ENCODE measurements at regions of chr17 and their contacts with region 1.

Region 1: DNA sequence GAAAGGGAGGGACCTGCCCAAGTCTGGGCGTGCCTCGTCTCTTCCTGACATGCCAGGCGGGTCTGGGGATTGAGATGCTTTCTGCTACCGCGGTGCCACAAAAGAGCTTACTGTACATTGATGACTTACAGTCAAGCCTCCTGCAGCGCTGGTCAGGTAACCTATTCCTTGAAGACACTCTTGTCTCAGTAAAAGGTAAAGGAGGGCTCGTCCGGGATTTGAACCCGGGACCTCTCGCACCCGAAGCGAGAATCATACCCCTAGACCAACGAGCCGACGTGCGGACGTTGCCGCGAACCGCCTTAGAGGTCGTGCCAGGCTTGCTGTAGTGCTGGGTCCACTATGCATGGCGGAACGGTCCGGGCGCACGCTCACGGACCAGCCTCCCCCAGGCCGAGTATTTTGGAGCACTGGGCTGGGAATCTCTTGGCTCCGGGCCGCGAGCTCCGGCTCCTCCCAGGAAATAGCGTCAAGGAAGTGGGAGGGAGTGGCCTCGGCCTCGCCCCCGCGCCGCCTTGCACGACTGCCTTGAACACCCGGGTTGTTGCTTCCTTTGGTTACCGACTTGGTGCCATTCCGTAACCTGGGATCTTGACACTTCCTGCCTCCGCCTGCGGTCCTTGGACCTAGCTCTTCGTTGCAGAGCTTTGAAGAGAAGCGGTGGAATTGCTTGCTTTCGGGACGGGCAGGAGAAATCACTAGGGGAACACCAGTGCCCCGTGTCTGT is 12.4 kb upstream of the AURKB start:
- DNase-seq: peak; percentile 95
- H3K4me3 ChIP-seq: peak overlapping the region in 2 of 3 experiments; percentile 41 to 66
- H3K27ac ChIP-seq: peak overlapping the region; percentile 90
- H3K4me1 ChIP-seq: peaks cover 9% of the 10 kb centered on the region
- H3K27me3 ChIP-seq: no peaks in the 10 kb centered on the region
- CTCF ChIP-seq: no peak
- POLR2A ChIP-seq: peak; percentile 65

Region 2: DNA sequence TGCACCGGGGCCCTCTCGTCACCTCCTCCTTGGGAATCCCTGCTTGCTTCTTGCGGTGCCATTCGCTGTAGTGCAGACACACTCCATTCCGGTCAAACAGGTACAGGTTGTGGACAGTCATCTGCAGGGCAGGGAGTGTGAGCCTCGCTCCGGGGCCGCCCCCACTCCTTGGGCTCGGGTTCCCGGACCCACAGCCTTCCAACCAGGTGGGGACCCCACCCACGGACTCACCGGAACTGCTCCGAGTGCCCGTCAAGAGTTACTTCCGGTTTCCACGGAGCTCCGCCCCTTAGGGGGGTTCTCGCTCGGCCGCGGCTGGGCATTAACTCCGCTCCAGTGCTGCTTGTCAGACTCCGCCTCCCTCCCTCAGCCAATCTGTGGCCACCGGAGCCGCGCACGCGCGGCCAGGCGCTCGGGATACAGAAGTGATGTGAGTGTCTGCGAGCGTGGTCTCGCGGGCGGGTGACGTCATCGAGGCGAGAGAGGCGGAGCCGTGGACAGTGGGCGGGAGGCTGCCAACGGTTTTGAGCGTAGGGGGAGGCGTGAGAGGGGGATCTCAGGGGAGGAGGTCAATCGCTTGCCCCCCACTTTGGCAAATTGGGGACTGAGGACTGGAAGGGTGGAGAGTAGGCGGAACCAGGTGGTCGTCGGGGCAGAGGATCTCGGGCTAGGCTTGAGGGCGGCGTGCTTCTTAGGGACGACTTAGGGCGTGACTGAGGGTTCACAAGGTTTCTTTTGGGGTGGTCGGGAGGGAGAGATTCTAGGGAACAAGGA is 290.9 kb before region 1 on chr17 and contains the starts of genes CNTROB and TRAPPC1:
- CTCF ChIA-PET with region 1: no interaction called
- POLR2A ChIA-PET with region 1: no interaction called
- dilution Hi-C with region 1: no loop called
- intact Hi-C with region 1: no loop called
- DNase-seq: peak; percentile 99
- H3K4me3 ChIP-seq: peak within 1 kb of the TSS; percentile 74 to 98 (median 96)
- H3K27ac ChIP-seq: peak within 1 kb of the TSS; percentile 66
- H3K4me1 ChIP-seq: peaks cover 23% of the 10 kb centered on the region
- H3K27me3 ChIP-seq: no peaks in the 10 kb centered on the region
- CTCF ChIP-seq: no peak
- POLR2A ChIP-seq: no peak
- total RNA-seq, gene CNTROB: 45.0 and 47.2 TPM in 2 replicates
- total RNA-seq, gene TRAPPC1: 139 and 146 TPM in 2 replicates

Region 3: GRCh38 chr17:8138672-8139371 is 84.0 kb before region 1 on chr17:
- CTCF ChIA-PET with region 1: interaction called, 4 read pairs
- POLR2A ChIA-PET with region 1: no interaction called
- dilution Hi-C with region 1: no loop called
- intact Hi-C with region 1: loop called (anchors 1 kb)
- DNase-seq: peak; percentile 98
- H3K4me3 ChIP-seq: peak overlapping the region; percentile 26 to 89 (median 80)
- H3K27ac ChIP-seq: peak overlapping the region; percentile 88
- H3K4me1 ChIP-seq: peaks cover 14% of the 10 kb centered on the region
- H3K27me3 ChIP-seq: no peaks in the 10 kb centered on the region
- CTCF ChIP-seq: peak; percentile 83 to 91
- POLR2A ChIP-seq: no peak

Region 4: GRCh38 chr17:8173056-8173870 is 49.5 kb before region 1 on chr17:
- CTCF ChIA-PET with region 1: no interaction called
- POLR2A ChIA-PET with region 1: interaction called, 11 read pairs
- dilution Hi-C with region 1: no loop called
- intact Hi-C with region 1: no loop called
- DNase-seq: peak; percentile 95
- H3K4me3 ChIP-seq: peak overlapping the region in 2 of 3 experiments; percentile 37 to 68
- H3K27ac ChIP-seq: peak overlapping the region; percentile 95
- H3K4me1 ChIP-seq: peaks cover 23% of the 10 kb centered on the region
- H3K27me3 ChIP-seq: no peaks in the 10 kb centered on the region
- CTCF ChIP-seq: no peak
- POLR2A ChIP-seq: peak; percentile 100

Region 5: DNA sequence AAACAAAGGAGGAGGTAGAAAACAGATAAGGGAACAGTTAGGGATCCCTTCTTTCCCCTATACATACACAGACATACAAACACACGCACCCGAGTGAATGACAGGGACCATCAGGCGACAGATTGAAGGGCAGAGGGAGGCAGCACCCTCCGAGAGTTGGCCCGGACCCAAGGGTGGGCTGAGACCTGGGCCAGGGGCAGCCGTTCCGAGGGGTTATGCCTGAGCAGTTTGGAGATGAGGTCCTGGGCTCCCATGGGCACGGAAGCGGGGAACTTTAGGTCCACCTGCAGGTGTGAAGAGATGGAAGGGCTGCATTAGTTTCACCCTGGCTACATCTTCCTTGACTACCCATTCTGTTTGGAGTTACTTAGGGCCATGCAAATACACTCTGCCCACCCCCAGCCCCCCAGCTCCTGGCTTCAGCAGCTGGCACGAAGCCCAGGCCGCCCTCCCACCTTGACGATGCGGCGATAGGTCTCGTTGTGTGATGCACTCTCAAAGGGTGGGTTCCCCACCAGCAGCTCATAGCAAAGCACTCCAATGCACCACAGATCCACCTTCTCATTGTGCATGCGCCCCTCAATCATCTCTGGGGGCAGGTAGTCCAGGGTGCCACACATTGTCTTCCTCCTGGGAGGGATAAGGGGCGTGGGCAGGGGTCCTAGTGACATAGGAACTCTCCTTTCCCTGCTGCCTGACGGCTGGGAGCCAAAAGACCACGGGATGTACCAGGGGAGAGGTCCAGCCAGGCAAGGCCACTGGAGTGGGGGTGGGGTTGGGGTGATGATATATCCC is 17.8 kb before region 1 on chr17:
- CTCF ChIA-PET with region 1: interaction called, 10 read pairs
- POLR2A ChIA-PET with region 1: interaction called, 14 read pairs
- dilution Hi-C with region 1: no loop called
- intact Hi-C with region 1: loop called (anchors 1 kb)
- DNase-seq: no peak
- H3K4me3 ChIP-seq: no peak overlapping the region
- H3K27ac ChIP-seq: no peak overlapping the region
- H3K4me1 ChIP-seq: peaks cover 9% of the 10 kb centered on the region
- H3K27me3 ChIP-seq: no peaks in the 10 kb centered on the region
- CTCF ChIP-seq: no peak
- POLR2A ChIP-seq: no peak

Region 6: DNA sequence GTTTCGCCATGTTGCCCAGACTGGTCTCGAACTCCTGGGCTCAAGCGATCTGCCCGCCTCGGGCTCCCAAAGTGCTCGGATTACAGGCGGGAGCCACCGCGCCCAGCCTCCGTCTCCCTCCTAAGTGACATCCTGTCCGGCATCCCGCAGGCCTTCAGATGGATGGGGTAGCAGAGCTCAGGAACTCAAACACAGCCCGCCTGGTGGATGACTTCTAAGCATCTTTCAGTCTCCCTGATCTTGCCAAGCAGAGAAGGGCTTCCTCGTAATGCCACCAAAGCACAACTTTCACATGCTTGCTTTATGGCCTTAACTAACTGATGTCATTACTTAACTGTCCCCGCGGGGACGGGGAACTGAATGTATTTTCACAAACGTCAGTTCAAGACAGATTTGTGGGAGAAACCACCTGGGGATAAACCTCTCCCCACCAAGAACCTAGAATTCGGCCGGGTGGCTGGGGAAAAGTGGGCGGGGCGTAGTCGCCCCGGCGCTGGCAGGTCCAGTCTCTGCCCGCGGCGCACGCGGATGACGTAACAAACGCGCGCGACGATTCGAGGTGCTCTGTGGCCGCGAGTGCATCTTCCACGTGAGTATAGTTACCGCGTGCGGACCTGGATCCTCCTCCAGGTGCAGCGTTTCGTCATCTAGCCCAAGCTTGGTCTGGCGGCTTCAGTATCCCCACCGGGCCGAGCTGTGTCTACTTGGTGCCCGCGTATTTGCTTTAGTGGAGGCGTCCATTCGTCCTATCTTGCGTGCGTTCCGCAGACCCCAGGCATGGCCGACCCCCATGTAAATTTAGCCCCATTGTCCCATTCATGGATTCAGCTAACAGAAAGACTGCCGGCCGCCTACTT is 26.2 kb after region 1 on chr17 and contains the start of gene PFAS:
- CTCF ChIA-PET with region 1: interaction called, 8 read pairs
- POLR2A ChIA-PET with region 1: interaction called, 4 read pairs
- dilution Hi-C with region 1: no loop called
- intact Hi-C with region 1: loop called (anchors 1 kb)
- DNase-seq: peak; percentile 90
- H3K4me3 ChIP-seq: peak within 1 kb of the TSS; percentile 69 to 98 (median 80)
- H3K27ac ChIP-seq: peak within 1 kb of the TSS; percentile 73
- H3K4me1 ChIP-seq: peaks cover 14% of the 10 kb centered on the region
- H3K27me3 ChIP-seq: no peaks in the 10 kb centered on the region
- CTCF ChIP-seq: peak in 1 of 2 donors; percentile 6
- POLR2A ChIP-seq: peak; percentile 79
- total RNA-seq, gene PFAS: 84.1 and 108 TPM in 2 replicates

Region 7: DNA sequence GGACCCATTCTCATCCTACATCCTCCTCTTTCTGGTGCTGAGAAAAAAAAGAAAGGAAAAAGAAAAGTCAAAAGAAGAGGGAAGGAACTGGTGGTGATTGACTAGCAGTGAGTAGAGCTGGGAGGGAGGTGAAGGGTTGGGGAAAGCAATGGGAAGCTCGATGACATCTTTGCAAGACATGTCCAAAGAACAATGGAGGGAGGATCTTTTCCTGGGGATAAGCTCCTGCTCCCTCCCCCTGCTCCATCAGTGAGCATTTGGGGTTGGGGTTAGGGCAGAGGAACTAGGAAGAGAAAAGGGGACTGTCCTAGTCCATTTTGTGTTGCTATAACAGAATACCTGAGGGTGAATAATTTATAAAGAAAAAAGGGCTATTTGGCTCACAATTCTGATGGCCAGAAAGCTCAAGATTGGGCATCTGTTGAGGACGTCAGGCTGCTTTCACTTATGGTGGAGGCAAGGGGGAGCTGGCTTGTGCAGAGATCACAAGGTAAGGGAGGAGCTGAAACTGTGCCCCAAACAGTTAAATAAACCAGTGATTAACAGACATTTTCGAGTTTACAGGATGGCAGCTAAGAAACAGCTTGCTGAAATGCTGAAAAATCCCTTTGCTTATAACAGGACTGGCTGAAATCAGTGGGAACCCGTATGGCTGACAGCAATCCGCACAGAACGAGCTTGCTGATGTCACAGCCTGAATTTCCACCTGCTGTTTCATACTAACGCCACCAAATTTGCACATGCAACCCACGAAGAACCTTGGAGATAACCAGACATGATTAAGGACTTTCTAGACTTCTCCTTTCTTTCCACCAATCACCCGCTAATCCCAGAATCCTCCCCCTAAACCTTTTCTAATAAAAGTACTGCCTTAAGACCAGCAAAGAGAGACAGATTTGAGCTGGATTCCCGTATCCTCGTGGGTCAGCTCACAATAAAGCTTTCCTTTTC is 115.3 kb after region 1 on chr17:
- CTCF ChIA-PET with region 1: no interaction called
- POLR2A ChIA-PET with region 1: no interaction called
- dilution Hi-C with region 1: no loop called
- intact Hi-C with region 1: no loop called
- DNase-seq: no peak
- H3K4me3 ChIP-seq: no peak overlapping the region
- H3K27ac ChIP-seq: no peak overlapping the region
- H3K4me1 ChIP-seq: no peaks in the 10 kb centered on the region
- H3K27me3 ChIP-seq: peaks cover 0 to 1% of the 10 kb centered on the region in 2 experiments
- CTCF ChIP-seq: no peak
- POLR2A ChIP-seq: no peak

Region 8: DNA sequence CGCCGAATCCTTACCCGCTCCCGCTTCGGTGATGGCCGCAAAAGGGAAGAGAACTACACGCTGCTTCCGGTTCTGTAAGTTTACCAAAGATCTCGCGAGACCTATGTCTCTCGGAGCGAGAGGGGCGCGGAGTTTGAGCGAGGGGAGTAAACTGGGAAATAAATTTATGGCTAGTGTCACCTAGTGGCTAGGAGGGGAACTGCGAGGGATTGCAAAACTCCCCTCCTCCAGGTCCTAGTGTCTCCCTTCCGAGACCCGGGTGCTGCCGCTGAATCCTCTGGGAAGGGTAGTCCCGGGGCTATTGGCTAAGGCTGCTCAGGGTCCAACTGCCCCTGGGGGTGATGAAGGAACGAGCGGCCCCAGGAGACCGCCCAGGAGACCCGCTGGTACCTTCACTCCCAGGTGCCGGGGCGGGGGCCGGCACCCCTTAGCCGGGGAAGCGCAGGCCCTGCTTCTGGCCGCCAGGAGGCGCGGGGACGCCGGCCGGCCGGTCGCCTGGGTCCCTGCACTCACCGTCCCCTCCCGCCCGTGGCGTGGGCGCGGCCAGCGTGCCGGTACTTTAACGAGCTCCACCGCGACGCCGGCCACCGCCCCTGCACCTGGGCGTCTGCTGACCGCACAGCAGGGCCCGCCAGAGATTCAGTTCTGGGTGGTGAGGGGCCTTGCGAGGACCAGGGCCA is 160.5 kb after region 1 on chr17 and contains the start of gene RPL26:
- CTCF ChIA-PET with region 1: interaction called, 3 read pairs
- POLR2A ChIA-PET with region 1: no interaction called
- dilution Hi-C with region 1: no loop called
- intact Hi-C with region 1: loop called (anchors 1 kb)
- DNase-seq: peak; percentile 98
- H3K4me3 ChIP-seq: peak within 1 kb of the TSS; percentile 76 to 100 (median 99)
- H3K27ac ChIP-seq: peak within 1 kb of the TSS; percentile 78
- H3K4me1 ChIP-seq: peaks cover 39% of the 10 kb centered on the region
- H3K27me3 ChIP-seq: no peaks in the 10 kb centered on the region
- CTCF ChIP-seq: peak; percentile 69 to 95
- POLR2A ChIP-seq: peak; percentile 97
- total RNA-seq, gene RPL26: 1,739 and 1,805 TPM in 2 replicates